Mammary epithelial cell (primary cell): ENCODE measurements at regions of chr22 and their contacts with region 1.

Region 1: GRCh38 chr22:49767355-49768062 is 60.2 kb downstream of the BRD1 start:
- DNase-seq: peak; percentile 52
- H3K4me3 ChIP-seq: no peak overlapping the region
- H3K27ac ChIP-seq: no peak overlapping the region
- H3K4me1 ChIP-seq: peaks cover 10% of the 10 kb centered on the region
- H3K27me3 ChIP-seq: no peaks in the 10 kb centered on the region
- CTCF ChIP-seq: peak; percentile 71 to 82

Region 2: DNA sequence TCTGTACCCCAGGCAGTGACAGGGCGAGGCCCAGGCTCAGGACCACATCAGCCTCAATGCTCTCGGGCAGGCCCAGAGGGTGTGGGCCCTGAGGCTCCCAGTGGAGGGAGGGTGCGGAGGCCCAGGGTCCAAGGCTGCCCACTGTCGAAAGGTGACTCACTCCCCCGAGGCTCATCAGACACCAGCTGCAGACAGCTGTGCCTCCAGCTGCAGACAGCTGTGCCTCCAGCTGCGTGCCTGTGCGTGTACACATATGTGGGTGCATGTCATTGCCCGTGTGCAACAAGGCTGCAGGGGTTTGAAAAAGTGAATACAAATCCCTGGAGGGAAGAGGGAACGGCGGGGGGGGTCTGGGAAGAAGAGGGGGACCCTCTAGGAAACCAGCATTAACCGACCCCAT is 74.1 kb before region 1 on chr22:
- CTCF ChIA-PET with region 1: no interaction called
- dilution Hi-C with region 1: no loop called
- in situ Hi-C with region 1: no loop called
- intact Hi-C with region 1: no loop called
- DNase-seq: no peak
- H3K4me3 ChIP-seq: no peak overlapping the region
- H3K27ac ChIP-seq: no peak overlapping the region
- H3K4me1 ChIP-seq: no peaks in the 10 kb centered on the region
- H3K27me3 ChIP-seq: no peaks in the 10 kb centered on the region
- CTCF ChIP-seq: no peak

Region 3: DNA sequence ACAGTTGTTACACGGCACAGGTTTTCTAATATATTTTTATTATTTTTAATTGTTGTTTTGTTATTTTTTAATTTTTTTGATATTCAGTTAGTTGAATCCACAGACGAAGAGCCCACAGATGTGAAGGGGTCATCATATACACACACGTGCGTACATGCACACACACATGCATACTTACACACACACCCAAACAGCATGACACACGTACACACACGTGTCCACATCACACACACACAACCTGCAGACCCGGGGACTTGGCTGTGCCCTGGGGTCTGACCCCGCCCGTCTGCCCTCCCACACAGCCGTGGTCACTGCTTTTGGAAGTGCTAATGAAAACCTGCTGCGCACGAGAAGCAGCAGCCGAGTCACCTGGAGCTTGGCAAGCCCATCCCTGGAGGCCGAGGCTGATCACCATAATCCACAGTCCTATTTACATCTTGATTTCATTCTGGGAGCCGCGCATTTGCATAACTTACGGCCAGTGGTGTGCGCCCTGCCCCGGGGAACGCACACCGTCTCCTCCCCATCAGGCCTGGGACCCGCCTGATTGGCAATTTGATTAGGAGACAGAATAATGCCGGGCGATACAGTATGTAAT is 50.1 kb before region 1 on chr22:
- CTCF ChIA-PET with region 1: no interaction called
- dilution Hi-C with region 1: no loop called
- in situ Hi-C with region 1: no loop called
- intact Hi-C with region 1: no loop called
- DNase-seq: no peak
- H3K4me3 ChIP-seq: no peak overlapping the region
- H3K27ac ChIP-seq: no peak overlapping the region
- H3K4me1 ChIP-seq: no peaks in the 10 kb centered on the region
- H3K27me3 ChIP-seq: no peaks in the 10 kb centered on the region
- CTCF ChIP-seq: no peak

Region 4: GRCh38 chr22:49827853-49828598 is 60.5 kb after region 1 on chr22 and contains the start of gene BRD1:
- CTCF ChIA-PET with region 1: no interaction called
- dilution Hi-C with region 1: no loop called
- in situ Hi-C with region 1: no loop called
- intact Hi-C with region 1: loop called (anchors 2 kb)
- DNase-seq: peak; percentile 49
- H3K4me3 ChIP-seq: peak within 1 kb of the TSS; percentile 66 to 91 (median 75)
- H3K27ac ChIP-seq: peak within 1 kb of the TSS; percentile 77
- H3K4me1 ChIP-seq: peaks cover 25% of the 10 kb centered on the region
- H3K27me3 ChIP-seq: no peaks in the 10 kb centered on the region
- CTCF ChIP-seq: no peak
- total RNA-seq, gene BRD1: 25.5 to 26.9 TPM

Region 5: GRCh38 chr22:49903322-49904039 is 136.0 kb after region 1 on chr22:
- CTCF ChIA-PET with region 1: no interaction called
- dilution Hi-C with region 1: no loop called
- in situ Hi-C with region 1: no loop called
- intact Hi-C with region 1: no loop called
- DNase-seq: no peak
- H3K4me3 ChIP-seq: no peak overlapping the region
- H3K27ac ChIP-seq: no peak overlapping the region
- H3K4me1 ChIP-seq: no peaks in the 10 kb centered on the region
- H3K27me3 ChIP-seq: no peaks in the 10 kb centered on the region
- CTCF ChIP-seq: no peak

Region 6: DNA sequence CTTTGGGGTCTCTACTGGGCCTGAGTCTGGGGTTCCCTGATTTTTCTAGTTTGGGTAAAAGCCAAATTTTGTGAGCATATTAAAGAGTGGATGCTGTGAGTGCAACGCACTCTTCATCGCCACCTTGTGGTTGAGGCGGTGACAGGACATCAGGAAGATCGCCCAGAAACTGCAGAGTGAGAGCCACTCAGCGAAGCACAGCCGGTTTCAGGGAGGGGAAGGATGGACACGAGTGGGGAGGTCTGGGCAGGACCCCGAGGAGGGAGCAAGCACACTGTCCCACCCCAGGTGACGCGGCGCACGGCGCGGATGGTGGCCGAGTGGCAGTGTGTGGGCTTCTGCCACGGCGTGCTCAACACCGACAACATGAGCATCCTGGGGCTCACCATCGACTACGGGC is 442.4 kb after region 1 on chr22:
- CTCF ChIA-PET with region 1: no interaction called
- dilution Hi-C with region 1: no loop called
- in situ Hi-C with region 1: no loop called
- intact Hi-C with region 1: loop called (anchors 5 kb)
- DNase-seq: peak; percentile 37
- H3K4me3 ChIP-seq: no peak overlapping the region
- H3K27ac ChIP-seq: no peak overlapping the region
- H3K4me1 ChIP-seq: no peaks in the 10 kb centered on the region
- H3K27me3 ChIP-seq: no peaks in the 10 kb centered on the region
- CTCF ChIP-seq: peak; percentile 83 to 93